Naive thymus-derived CD4-positive, alpha-beta T cell (primary cell): ENCODE measurements at regions of chrX and their contacts with region 1.

Region 1: GRCh38 chrX:20530406-20530921 is 263.8 kb upstream of the RPS6KA3 start:
- DNase-seq: peak; percentile 10 to 61 (median 43)
- ATAC-seq: peak; percentile 47
- H3K4me3 ChIP-seq: no peak overlapping the region
- H3K4me3 Mint-ChIP-seq: peak overlapping the region in 4 of 10 donors; percentile 16 to 48 (median 32)
- H3K27ac ChIP-seq: no peak overlapping the region
- H3K27ac Mint-ChIP-seq: peak overlapping the region in 2 of 9 donors; percentile 6 to 39
- H3K4me1 ChIP-seq: no peaks in the 10 kb centered on the region
- H3K4me1 Mint-ChIP-seq: peaks cover 0 to 16% (median 4%) of the 10 kb centered on the region in 7 donors
- H3K27me3 ChIP-seq: no peaks in the 10 kb centered on the region
- H3K27me3 Mint-ChIP-seq: peaks cover 18 to 59% (median 22%) of the 10 kb centered on the region in 5 donors

Region 2: GRCh38 chrX:21479695-21480270 is 949.3 kb after region 1 on chrX:
- CTCF ChIA-PET with region 1: interaction called, 10 read pairs
- POLR2A ChIA-PET with region 1: no interaction called
- intact Hi-C with region 1: loop called (anchors 1 kb)
- DNase-seq: peak in 7 of 9 donors; percentile 13 to 59 (median 43)
- ATAC-seq: peak; percentile 67
- H3K4me3 ChIP-seq: no peak overlapping the region
- H3K4me3 Mint-ChIP-seq: no peak overlapping the region
- H3K27ac ChIP-seq: no peak overlapping the region
- H3K27ac Mint-ChIP-seq: no peak overlapping the region
- H3K4me1 ChIP-seq: no peaks in the 10 kb centered on the region
- H3K4me1 Mint-ChIP-seq: peaks cover 0 to 22% (median 14%) of the 10 kb centered on the region in 7 donors
- H3K27me3 ChIP-seq: peaks cover 0 to 3% of the 10 kb centered on the region in 2 donors
- H3K27me3 Mint-ChIP-seq: no peaks in the 10 kb centered on the region

Region 3: GRCh38 chrX:21745756-21746155 is 1215.3 kb after region 1 on chrX:
- CTCF ChIA-PET with region 1: interaction called, 15 read pairs
- POLR2A ChIA-PET with region 1: no interaction called
- intact Hi-C with region 1: loop called (anchors 1 kb)
- DNase-seq: peak in 8 of 9 donors; percentile 3 to 23 (median 18)
- ATAC-seq: no peak
- H3K4me3 ChIP-seq: no peak overlapping the region
- H3K4me3 Mint-ChIP-seq: no peak overlapping the region
- H3K27ac ChIP-seq: no peak overlapping the region
- H3K27ac Mint-ChIP-seq: no peak overlapping the region
- H3K4me1 ChIP-seq: no peaks in the 10 kb centered on the region
- H3K4me1 Mint-ChIP-seq: no peaks in the 10 kb centered on the region
- H3K27me3 ChIP-seq: no peaks in the 10 kb centered on the region
- H3K27me3 Mint-ChIP-seq: peaks cover 0 to 21% (median 0%) of the 10 kb centered on the region in 5 donors

Region 4: GRCh38 chrX:21985332-21985777 is 1454.9 kb after region 1 on chrX:
- CTCF ChIA-PET with region 1: no interaction called
- POLR2A ChIA-PET with region 1: no interaction called
- intact Hi-C with region 1: loop called in 1 of 2 experiments (anchors 5 kb)
- DNase-seq: peak; percentile 10 to 74 (median 61)
- ATAC-seq: peak; percentile 100
- H3K4me3 ChIP-seq: no peak overlapping the region
- H3K4me3 Mint-ChIP-seq: no peak overlapping the region
- H3K27ac ChIP-seq: no peak overlapping the region
- H3K27ac Mint-ChIP-seq: peak overlapping the region in 1 of 9 donors; percentile 70
- H3K4me1 ChIP-seq: no peaks in the 10 kb centered on the region
- H3K4me1 Mint-ChIP-seq: peaks cover 0 to 10% (median 4%) of the 10 kb centered on the region in 7 donors
- H3K27me3 ChIP-seq: no peaks in the 10 kb centered on the region
- H3K27me3 Mint-ChIP-seq: no peaks in the 10 kb centered on the region